ENCODE measurements at regions of chr10 and their contacts with region 1.

Region 1: DNA sequence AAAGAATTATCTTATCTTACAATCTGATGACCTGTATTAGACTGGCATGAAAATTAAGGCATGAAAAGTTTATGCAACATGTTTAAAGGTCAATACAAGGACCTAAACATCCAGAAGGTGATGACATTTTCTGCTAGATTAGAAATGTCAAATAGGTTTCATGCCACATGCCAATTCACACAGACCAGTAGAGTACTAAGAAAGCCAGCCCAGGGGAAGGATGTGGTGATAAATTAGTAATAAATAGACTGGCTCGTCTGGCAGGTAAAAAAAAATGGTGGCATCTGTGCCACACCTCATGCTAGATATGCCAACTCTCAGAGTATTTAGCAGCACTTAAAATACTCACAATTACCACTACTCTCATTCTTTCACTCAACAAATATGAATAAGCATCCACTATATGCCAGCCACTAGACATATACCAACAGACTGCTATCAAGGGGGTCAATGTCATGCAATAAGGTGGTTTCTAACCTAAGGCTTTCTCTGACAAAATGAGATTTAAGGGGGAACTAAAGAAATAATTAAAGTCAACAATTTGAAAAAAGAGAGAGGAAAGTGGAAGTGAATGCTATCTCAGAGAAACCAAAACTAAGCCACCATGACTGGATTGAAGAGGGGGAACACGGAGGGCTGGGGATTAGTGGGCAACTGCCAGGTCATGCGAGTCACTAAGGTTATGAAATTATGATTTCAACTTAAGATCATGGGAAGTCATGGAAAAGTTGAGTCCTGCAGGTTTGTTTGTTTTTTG is 83.5 kb downstream of the SGMS1 start:
- DNase-seq: peak; percentile 33
- ATAC-seq: no peak
- H3K4me3 ChIP-seq: peak overlapping the region in 1 of 5 experiments; percentile 4
- H3K4me3 Mint-ChIP-seq: peak overlapping the region; percentile 63
- H3K27ac ChIP-seq: no peak overlapping the region
- H3K27ac Mint-ChIP-seq: peak overlapping the region; percentile 24
- H3K4me1 ChIP-seq: peaks cover 45% of the 10 kb centered on the region in 2 donors
- H3K4me1 Mint-ChIP-seq: peaks cover 62% of the 10 kb centered on the region
- H3K27me3 ChIP-seq: no peaks in the 10 kb centered on the region
- H3K27me3 Mint-ChIP-seq: no peaks in the 10 kb centered on the region
- CTCF ChIP-seq: no peak

Region 2: GRCh38 chr10:50497757-50498156 is 42.5 kb before region 1 on chr10:
- CTCF ChIA-PET with region 1: no interaction called
- POLR2A ChIA-PET with region 1: no interaction called
- intact Hi-C with region 1: loop called (anchors 5 kb)
- DNase-seq: no peak
- ATAC-seq: no peak
- H3K4me3 ChIP-seq: no peak overlapping the region
- H3K4me3 Mint-ChIP-seq: peak overlapping the region; percentile 17
- H3K27ac ChIP-seq: no peak overlapping the region
- H3K27ac Mint-ChIP-seq: peak overlapping the region; percentile 58
- H3K4me1 ChIP-seq: peaks cover 2 to 13% of the 10 kb centered on the region in 2 donors
- H3K4me1 Mint-ChIP-seq: peaks cover 28% of the 10 kb centered on the region
- H3K27me3 ChIP-seq: no peaks in the 10 kb centered on the region
- H3K27me3 Mint-ChIP-seq: no peaks in the 10 kb centered on the region
- CTCF ChIP-seq: no peak

Region 3: DNA sequence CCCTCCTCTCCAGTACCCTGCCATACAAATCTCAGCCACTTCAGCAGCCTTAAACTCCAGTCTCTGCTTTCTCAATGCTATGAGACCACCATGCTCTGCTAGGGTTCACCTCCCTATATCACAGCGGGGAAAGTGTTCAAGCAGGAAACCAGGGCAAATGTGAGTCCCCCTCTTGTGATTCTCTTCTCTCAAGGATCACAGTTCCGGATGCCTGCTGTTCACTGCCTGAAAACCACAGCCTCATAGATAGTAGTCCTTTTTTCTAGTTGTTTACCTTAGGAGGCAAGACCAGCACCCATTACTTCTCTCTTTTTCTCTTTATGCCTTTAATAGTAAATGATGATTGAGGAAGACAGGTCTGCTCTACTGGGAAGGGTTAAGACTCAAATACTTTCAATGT is 17.3 kb before region 1 on chr10:
- CTCF ChIA-PET with region 1: no interaction called
- POLR2A ChIA-PET with region 1: no interaction called
- intact Hi-C with region 1: loop called (anchors 1 kb)
- DNase-seq: no peak
- ATAC-seq: no peak
- H3K4me3 ChIP-seq: no peak overlapping the region
- H3K4me3 Mint-ChIP-seq: no peak overlapping the region
- H3K27ac ChIP-seq: no peak overlapping the region
- H3K27ac Mint-ChIP-seq: no peak overlapping the region
- H3K4me1 ChIP-seq: no peaks in the 10 kb centered on the region
- H3K4me1 Mint-ChIP-seq: peaks cover 2% of the 10 kb centered on the region
- H3K27me3 ChIP-seq: no peaks in the 10 kb centered on the region
- H3K27me3 Mint-ChIP-seq: no peaks in the 10 kb centered on the region
- CTCF ChIP-seq: no peak